GM12878 (cell line): ENCODE measurements at regions of chr11 and their contacts with region 1.

Region 1: DNA sequence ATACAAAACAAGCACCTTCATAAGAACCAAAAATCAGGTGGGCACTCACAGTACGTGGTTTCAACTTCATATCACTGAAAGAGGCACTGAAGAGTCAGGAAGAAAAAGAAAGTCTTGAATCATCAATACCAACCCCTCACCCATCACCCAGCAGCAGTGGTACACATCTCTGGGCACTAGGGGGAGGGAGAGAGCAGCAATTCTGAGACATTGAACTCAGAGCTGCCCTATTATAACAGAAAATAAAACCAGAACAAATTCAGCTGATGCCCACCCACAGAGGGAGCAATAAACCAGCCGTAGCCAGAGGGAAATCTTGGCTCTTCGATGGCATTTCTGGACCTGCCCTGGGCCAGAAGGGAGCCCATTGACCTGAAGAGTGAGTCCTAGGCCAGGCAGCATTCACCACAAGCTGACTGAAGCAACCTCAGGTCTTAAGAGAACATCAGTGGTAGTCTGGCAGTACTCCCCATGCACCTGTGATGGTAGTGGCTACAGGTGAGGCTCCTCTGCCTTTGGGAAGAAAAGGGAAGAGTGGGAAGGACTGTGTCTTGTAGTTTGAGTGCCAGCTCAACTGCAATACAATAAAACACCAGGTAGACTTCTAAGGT is 42.2 kb upstream of the FAM181B start:
- DNase-seq: no peak
- ATAC-seq: peak; percentile 100
- H3K4me3 ChIP-seq: no peak overlapping the region
- H3K27ac ChIP-seq: no peak overlapping the region
- H3K4me1 ChIP-seq: no peaks in the 10 kb centered on the region
- H3K27me3 ChIP-seq: no peaks in the 10 kb centered on the region
- CTCF ChIP-seq: peak; percentile 76 to 90 (median 85)
- EP300 ChIP-seq: no peak
- POLR2A ChIP-seq: no peak
- RAD21 ChIP-seq: peak; percentile 64

Region 2: DNA sequence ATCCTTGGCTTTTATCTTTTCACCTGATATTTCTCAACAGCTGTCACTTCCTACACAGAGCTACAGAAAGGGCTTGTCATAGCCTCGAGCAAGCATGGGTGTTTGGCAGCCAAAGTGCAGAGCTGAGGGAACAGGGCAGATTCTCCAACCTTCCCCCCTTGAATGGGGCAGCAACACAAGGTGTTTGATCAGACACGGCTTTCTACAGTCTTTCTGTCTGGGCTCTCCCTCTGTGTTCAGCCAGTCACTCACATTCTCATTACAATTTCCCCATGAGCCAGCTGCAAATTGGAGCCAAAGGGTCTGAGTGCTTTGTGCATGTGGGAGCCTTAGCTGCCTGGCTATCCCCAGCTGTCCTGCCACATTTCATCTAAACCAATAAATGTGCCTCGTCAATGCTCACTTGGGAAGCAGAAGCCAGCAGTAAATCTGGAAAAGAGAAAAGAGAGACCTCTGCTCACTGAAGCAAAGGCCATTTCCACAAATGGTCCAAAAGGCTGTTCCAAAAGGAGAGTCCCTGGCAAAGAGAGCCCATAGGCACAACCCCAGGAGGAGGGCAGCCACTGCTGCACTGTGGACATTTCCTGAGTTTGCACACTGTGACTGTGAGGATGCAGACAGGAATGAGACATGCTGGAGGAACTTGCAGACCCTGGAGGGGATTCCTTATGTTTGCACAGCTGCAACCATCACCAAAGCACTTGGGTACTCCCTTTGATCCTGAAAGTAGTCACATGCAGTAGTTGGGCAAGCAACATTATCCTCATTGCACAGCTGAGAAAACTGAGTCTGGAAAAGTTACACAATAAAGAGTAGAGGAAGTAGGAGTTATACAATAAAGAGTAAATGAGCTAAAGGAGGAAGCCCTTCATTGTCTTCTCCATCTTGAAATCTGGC is 228.9 kb before region 1 on chr11:
- CTCF ChIA-PET with region 1: no interaction called
- POLR2A ChIA-PET with region 1: no interaction called
- RAD21 ChIA-PET with region 1: no interaction called
- SMC1A ChIA-PET with region 1: no interaction called
- in situ Hi-C with region 1: no loop called
- intact Hi-C with region 1: no loop called
- DNase-seq: no peak
- ATAC-seq: no peak
- H3K4me3 ChIP-seq: no peak overlapping the region
- H3K27ac ChIP-seq: no peak overlapping the region
- H3K4me1 ChIP-seq: no peaks in the 10 kb centered on the region
- H3K27me3 ChIP-seq: no peaks in the 10 kb centered on the region; a peak in 1 of 4 replicates
- CTCF ChIP-seq: no peak
- EP300 ChIP-seq: no peak
- POLR2A ChIP-seq: no peak
- RAD21 ChIP-seq: no peak

Region 3: GRCh38 chr11:82756765-82757639 is 18.8 kb before region 1 on chr11:
- CTCF ChIA-PET with region 1: interaction called, 24 read pairs
- POLR2A ChIA-PET with region 1: interaction called, 3 read pairs
- RAD21 ChIA-PET with region 1: interaction called, 6 read pairs
- SMC1A ChIA-PET with region 1: interaction called, 3 read pairs
- in situ Hi-C with region 1: no loop called
- intact Hi-C with region 1: no loop called
- DNase-seq: no peak
- ATAC-seq: peak; percentile 42; the same call in 2 of the 3 replicates
- H3K4me3 ChIP-seq: peak overlapping the region; percentile 39; the same call in 1 of the 2 replicates
- H3K27ac ChIP-seq: peak overlapping the region; percentile 12; the same call in 1 of the 2 replicates
- H3K4me1 ChIP-seq: peaks cover 14% of the 10 kb centered on the region
- H3K27me3 ChIP-seq: 0 out of 4 replicates have a peak, but pooled peaks cover 0 to 2% of the 10 kb centered on the region in 2 experiments
- CTCF ChIP-seq: no peak
- EP300 ChIP-seq: no peak
- POLR2A ChIP-seq: no peak
- RAD21 ChIP-seq: no peak

Region 4: DNA sequence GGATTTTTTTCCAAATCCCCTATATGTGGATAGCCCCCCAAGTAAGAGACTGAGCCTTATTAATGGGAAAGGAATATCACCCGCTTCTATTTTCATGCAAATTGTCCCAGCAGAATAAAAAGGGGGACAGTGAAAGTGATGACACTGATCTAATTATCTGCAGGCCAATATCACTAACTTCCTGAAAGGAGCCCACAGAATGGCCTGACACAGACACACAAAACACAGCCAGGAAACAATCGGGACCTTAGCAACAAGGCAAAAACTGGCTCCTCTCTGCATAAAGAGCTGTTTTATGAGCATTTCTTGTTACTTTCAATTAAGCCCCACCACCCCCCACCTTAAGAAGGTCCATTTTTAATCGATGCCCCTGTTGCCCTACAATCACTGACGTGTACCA is 12.1 kb after region 1 on chr11:
- CTCF ChIA-PET with region 1: interaction called, 16 read pairs
- POLR2A ChIA-PET with region 1: no interaction called
- RAD21 ChIA-PET with region 1: no interaction called
- SMC1A ChIA-PET with region 1: interaction called, 3 read pairs
- in situ Hi-C with region 1: no loop called
- intact Hi-C with region 1: no loop called
- DNase-seq: no peak
- ATAC-seq: no peak
- H3K4me3 ChIP-seq: no peak overlapping the region
- H3K27ac ChIP-seq: no peak overlapping the region
- H3K4me1 ChIP-seq: no peaks in the 10 kb centered on the region
- H3K27me3 ChIP-seq: 0 out of 4 replicates have a peak, but pooled peaks cover 0 to 2% of the 10 kb centered on the region in 2 experiments
- CTCF ChIP-seq: no peak
- EP300 ChIP-seq: no peak
- POLR2A ChIP-seq: no peak
- RAD21 ChIP-seq: no peak

Region 5: GRCh38 chr11:82945682-82946081 is 169.8 kb after region 1 on chr11:
- CTCF ChIA-PET with region 1: no interaction called
- POLR2A ChIA-PET with region 1: no interaction called
- RAD21 ChIA-PET with region 1: no interaction called
- SMC1A ChIA-PET with region 1: no interaction called
- in situ Hi-C with region 1: no loop called
- intact Hi-C with region 1: no loop called
- DNase-seq: no peak
- ATAC-seq: no peak
- H3K4me3 ChIP-seq: no peak overlapping the region
- H3K27ac ChIP-seq: no peak overlapping the region
- H3K4me1 ChIP-seq: no peaks in the 10 kb centered on the region
- H3K27me3 ChIP-seq: no peaks in the 10 kb centered on the region
- CTCF ChIP-seq: no peak
- EP300 ChIP-seq: no peak
- POLR2A ChIP-seq: no peak
- RAD21 ChIP-seq: no peak